ENCODE measurements at regions of chr15 and their contacts with region 1.

Region 1: DNA sequence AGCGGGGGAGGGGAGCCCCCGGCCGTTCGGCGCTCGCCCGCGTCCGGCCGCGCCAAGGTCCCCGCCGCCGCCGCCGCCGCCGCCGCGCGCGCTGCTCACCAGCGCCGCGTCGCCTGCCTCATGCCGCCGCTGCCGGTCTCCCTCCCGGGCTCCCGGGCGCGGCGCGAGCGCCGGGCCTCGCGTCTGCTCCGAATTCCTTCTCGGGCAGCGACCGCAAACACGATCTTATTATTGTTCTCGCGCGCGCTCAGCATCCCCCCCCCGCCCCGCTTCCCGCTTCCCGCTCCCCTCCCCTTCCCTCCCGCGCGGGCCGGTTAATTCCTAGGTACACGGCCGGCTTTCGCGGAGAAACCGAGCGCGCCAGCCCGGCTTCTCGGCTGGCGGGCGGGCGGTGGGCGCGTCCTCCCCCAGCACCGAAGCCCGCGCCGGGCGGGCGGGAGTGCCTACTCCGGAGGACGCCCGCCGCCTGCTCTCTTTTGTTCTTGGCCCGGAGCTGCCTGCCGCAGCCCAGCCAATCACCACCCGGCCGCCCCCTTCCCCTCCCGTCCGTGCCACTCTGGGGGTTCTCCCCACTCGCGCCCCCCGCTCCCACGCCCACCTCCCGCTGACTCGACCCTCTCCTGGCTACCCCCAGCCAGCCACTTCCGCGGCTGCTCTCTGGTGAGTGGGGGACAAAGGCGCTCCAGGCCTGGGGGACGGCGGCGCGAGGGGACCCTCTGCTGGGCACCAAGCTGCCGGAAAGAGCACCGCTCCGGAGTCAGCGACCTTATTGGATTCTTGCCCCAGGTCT is at the start of gene HDGFL3:
- DNase-seq: peak; percentile 37
- H3K4me3 ChIP-seq: peak within 1 kb of the TSS; percentile 76
- H3K27ac ChIP-seq: peak within 1 kb of the TSS; percentile 60
- H3K4me1 ChIP-seq: no peaks in the 10 kb centered on the region
- H3K27me3 ChIP-seq: no peaks in the 10 kb centered on the region
- CTCF ChIP-seq: no peak
- total RNA-seq, gene HDGFL3: 16.2 to 16.7 TPM

Region 2: DNA sequence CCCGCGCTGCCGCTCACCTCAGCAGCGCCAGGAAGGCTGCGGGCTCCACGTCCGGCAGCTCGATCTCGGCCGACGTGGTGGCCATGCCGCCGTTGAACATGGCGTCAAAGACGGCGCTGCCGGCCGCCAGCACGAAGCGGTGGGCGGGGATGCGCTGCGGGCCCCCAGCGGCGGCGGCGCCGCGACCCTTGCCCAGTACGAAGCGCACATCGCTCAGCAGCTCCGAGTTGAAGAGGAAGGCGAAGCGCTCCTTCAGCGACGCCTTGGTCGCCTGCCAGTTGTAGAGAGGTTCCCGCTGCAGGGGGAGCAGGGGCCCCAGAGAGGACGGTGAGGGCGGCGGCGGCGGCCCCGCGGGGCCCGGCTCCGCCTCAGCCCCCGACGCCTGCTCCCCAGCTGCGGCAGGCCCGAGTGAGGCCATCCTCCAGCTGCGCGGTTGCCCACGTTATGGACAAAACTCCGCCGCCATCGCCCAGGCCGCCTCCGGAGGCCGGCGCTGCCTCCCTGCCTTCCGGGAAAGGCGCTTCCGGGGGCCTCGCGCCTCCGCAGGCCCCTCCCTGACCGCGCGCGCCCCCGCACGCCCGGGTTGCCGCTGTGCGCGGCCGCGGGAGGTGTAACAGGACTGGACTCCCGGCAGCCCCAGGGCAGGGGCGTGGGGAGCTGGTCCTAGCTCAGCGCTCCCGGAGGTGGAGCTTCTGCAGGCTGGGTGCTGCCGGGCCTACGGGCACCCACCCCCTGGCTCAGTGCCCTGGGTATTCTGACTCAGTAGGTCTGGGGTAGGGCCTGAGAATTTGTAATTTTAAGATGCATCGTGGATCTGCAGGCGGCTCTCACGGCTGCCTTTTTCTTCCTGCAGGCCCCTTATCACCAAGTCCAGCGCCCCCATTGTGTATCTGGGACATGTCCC is 140.8 kb before region 1 on chr15 and contains the start of gene BTBD1:
- intact Hi-C with region 1: loop called (anchors 5 kb)
- DNase-seq: peak; percentile 95
- H3K4me3 ChIP-seq: peak within 1 kb of the TSS; percentile 99
- H3K27ac ChIP-seq: peak within 1 kb of the TSS; percentile 97
- H3K4me1 ChIP-seq: peaks cover 18% of the 10 kb centered on the region
- H3K27me3 ChIP-seq: no peaks in the 10 kb centered on the region
- CTCF ChIP-seq: no peak
- total RNA-seq, gene BTBD1: 56.7 to 63.6 TPM

Region 3: GRCh38 chr15:83413054-83413719 is 205.4 kb after region 1 on chr15:
- intact Hi-C with region 1: no loop called
- DNase-seq: no peak
- H3K4me3 ChIP-seq: no peak overlapping the region
- H3K27ac ChIP-seq: no peak overlapping the region
- H3K4me1 ChIP-seq: no peaks in the 10 kb centered on the region
- H3K27me3 ChIP-seq: no peaks in the 10 kb centered on the region
- CTCF ChIP-seq: no peak